ENCODE measurements at regions of chr1 and their contacts with region 1.

Region 1: GRCh38 chr1:156500797-156501499 is 373 bp upstream of the MEF2D start:
- DNase-seq: peak; percentile 90 to 97 (median 94)
- H3K4me3 ChIP-seq: peak overlapping the region; percentile 79
- H3K4me3 Mint-ChIP-seq: peak overlapping the region; percentile 81 to 98 (median 93)
- H3K27ac ChIP-seq: peak overlapping the region; percentile 95
- H3K27ac Mint-ChIP-seq: peak overlapping the region; percentile 98 to 100 (median 99)
- H3K4me1 ChIP-seq: peaks cover 77% of the 10 kb centered on the region
- H3K4me1 Mint-ChIP-seq: peaks cover 75 to 79% (median 78%) of the 10 kb centered on the region in 3 donors
- H3K27me3 ChIP-seq: no peaks in the 10 kb centered on the region
- H3K27me3 Mint-ChIP-seq: peaks cover 0 to 7% of the 10 kb centered on the region in 2 donors

Region 2: GRCh38 chr1:156456622-156457465 is 44.1 kb before region 1 on chr1:
- CTCF ChIA-PET with region 1: interaction called, 16 read pairs
- POLR2A ChIA-PET with region 1: interaction called, 24 read pairs
- DNase-seq: peak; percentile 93 to 99 (median 96)
- H3K4me3 ChIP-seq: peak overlapping the region; percentile 100
- H3K4me3 Mint-ChIP-seq: peak overlapping the region; percentile 91 to 97 (median 95)
- H3K27ac ChIP-seq: peak overlapping the region; percentile 99
- H3K27ac Mint-ChIP-seq: peak overlapping the region; percentile 98 to 100 (median 99)
- H3K4me1 ChIP-seq: peaks cover 12% of the 10 kb centered on the region
- H3K4me1 Mint-ChIP-seq: peaks cover 12 to 20% (median 17%) of the 10 kb centered on the region in 3 donors
- H3K27me3 ChIP-seq: no peaks in the 10 kb centered on the region
- H3K27me3 Mint-ChIP-seq: peaks cover 0 to 1% of the 10 kb centered on the region in 2 donors

Region 3: GRCh38 chr1:156489166-156489934 is 11.6 kb before region 1 on chr1:
- CTCF ChIA-PET with region 1: interaction called, 177 read pairs
- POLR2A ChIA-PET with region 1: interaction called, 49 read pairs
- DNase-seq: peak; percentile 33 to 72 (median 55)
- H3K4me3 ChIP-seq: peak overlapping the region; percentile 40
- H3K4me3 Mint-ChIP-seq: peak overlapping the region; percentile 62 to 91 (median 81)
- H3K27ac ChIP-seq: peak overlapping the region; percentile 69
- H3K27ac Mint-ChIP-seq: peak overlapping the region; percentile 86 to 100 (median 96)
- H3K4me1 ChIP-seq: peaks cover 94% of the 10 kb centered on the region
- H3K4me1 Mint-ChIP-seq: peaks cover 87 to 97% (median 96%) of the 10 kb centered on the region in 3 donors
- H3K27me3 ChIP-seq: no peaks in the 10 kb centered on the region
- H3K27me3 Mint-ChIP-seq: no peaks in the 10 kb centered on the region

Region 4: DNA sequence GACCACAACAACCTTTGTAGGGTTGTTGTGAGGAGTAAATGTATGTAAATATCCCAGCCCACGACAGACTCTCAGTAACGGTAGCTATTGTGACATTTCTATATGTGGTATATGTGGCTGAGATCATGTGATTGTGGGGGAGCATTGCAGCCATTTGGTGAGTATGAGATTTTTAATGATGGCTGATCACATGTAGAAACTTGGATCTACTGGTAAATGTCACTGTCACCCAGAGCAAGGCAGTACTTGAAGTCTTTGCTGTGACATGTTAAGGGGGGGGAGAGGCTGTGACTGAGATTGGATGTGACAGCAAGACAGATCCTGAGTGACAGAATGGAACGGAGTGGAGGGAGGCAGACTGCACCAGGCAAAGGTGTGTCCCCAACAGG is 23.5 kb after region 1 on chr1:
- CTCF ChIA-PET with region 1: interaction called, 16 read pairs
- POLR2A ChIA-PET with region 1: interaction called, 12 read pairs
- DNase-seq: peak in 3 of 5 donors; percentile 39 to 52 (median 44)
- H3K4me3 ChIP-seq: peak overlapping the region; percentile 27
- H3K4me3 Mint-ChIP-seq: peak overlapping the region in 6 of 7 donors; percentile 47 to 86 (median 65)
- H3K27ac ChIP-seq: peak overlapping the region; percentile 49
- H3K27ac Mint-ChIP-seq: peak overlapping the region; percentile 32 to 93 (median 84)
- H3K4me1 ChIP-seq: peaks cover 31% of the 10 kb centered on the region
- H3K4me1 Mint-ChIP-seq: peaks cover 32 to 45% (median 33%) of the 10 kb centered on the region in 3 donors
- H3K27me3 ChIP-seq: no peaks in the 10 kb centered on the region
- H3K27me3 Mint-ChIP-seq: peaks cover 0 to 1% of the 10 kb centered on the region in 2 donors

Region 5: DNA sequence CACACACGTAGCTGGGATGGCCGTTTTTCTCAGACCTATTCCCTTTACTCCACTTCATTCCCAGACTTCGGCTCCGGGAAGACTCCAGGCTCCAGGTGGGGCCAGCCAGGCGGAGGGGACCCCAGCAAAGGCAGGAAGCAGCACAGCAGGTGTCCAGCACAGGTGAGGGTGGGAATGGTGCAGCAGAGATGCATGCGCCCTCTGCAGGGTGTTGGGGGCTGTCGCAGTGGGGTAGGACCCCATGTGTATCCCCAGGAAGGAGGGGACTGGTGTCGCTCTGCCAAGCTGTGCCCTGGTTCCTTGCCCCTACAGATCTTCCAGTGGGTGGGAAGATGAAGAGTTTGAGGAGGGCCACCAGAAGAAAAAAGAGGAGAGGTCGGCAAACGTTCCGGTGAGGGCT is 83.9 kb after region 1 on chr1:
- CTCF ChIA-PET with region 1: interaction called, 23 read pairs
- POLR2A ChIA-PET with region 1: interaction called, 15 read pairs
- DNase-seq: no peak
- H3K4me3 ChIP-seq: no peak overlapping the region
- H3K4me3 Mint-ChIP-seq: peak overlapping the region in 1 of 7 donors; percentile 46
- H3K27ac ChIP-seq: no peak overlapping the region
- H3K27ac Mint-ChIP-seq: no peak overlapping the region
- H3K4me1 ChIP-seq: peaks cover 30% of the 10 kb centered on the region
- H3K4me1 Mint-ChIP-seq: peaks cover 27 to 38% (median 33%) of the 10 kb centered on the region in 3 donors
- H3K27me3 ChIP-seq: no peaks in the 10 kb centered on the region
- H3K27me3 Mint-ChIP-seq: peaks cover 0 to 1% of the 10 kb centered on the region in 2 donors

Region 6: GRCh38 chr1:156591432-156592157 is 90.6 kb after region 1 on chr1 and contains the start of gene NAXE:
- CTCF ChIA-PET with region 1: interaction called, 8 read pairs
- POLR2A ChIA-PET with region 1: interaction called, 10 read pairs
- DNase-seq: peak; percentile 64 to 78 (median 70)
- H3K4me3 ChIP-seq: peak within 1 kb of the TSS; percentile 70
- H3K4me3 Mint-ChIP-seq: peak within 1 kb of the TSS; percentile 89 to 94 (median 91)
- H3K27ac ChIP-seq: peak within 1 kb of the TSS; percentile 67
- H3K27ac Mint-ChIP-seq: peak within 1 kb of the TSS; percentile 90 to 98 (median 96)
- H3K4me1 ChIP-seq: peaks cover 20% of the 10 kb centered on the region
- H3K4me1 Mint-ChIP-seq: peaks cover 20 to 24% (median 21%) of the 10 kb centered on the region in 3 donors
- H3K27me3 ChIP-seq: no peaks in the 10 kb centered on the region
- H3K27me3 Mint-ChIP-seq: no peaks in the 10 kb centered on the region
- total RNA-seq, gene NAXE: 63.0 to 69.1 TPM

Region 7: GRCh38 chr1:156697481-156697880 is 196.5 kb after region 1 on chr1:
- CTCF ChIA-PET with region 1: no interaction called
- POLR2A ChIA-PET with region 1: no interaction called
- DNase-seq: no peak
- H3K4me3 ChIP-seq: no peak overlapping the region
- H3K4me3 Mint-ChIP-seq: no peak overlapping the region
- H3K27ac ChIP-seq: no peak overlapping the region
- H3K27ac Mint-ChIP-seq: peak overlapping the region in 1 of 8 donors; percentile 38
- H3K4me1 ChIP-seq: no peaks in the 10 kb centered on the region
- H3K4me1 Mint-ChIP-seq: peaks cover 4 to 12% (median 9%) of the 10 kb centered on the region in 3 donors
- H3K27me3 ChIP-seq: peaks cover 9% of the 10 kb centered on the region
- H3K27me3 Mint-ChIP-seq: peaks cover 32 to 63% of the 10 kb centered on the region in 2 donors

Measured in CD8-positive, alpha-beta memory T cell (primary cell).